IMR-90 (cell line): ENCODE measurements at regions of chr5 and their contacts with region 1.

Region 1: DNA sequence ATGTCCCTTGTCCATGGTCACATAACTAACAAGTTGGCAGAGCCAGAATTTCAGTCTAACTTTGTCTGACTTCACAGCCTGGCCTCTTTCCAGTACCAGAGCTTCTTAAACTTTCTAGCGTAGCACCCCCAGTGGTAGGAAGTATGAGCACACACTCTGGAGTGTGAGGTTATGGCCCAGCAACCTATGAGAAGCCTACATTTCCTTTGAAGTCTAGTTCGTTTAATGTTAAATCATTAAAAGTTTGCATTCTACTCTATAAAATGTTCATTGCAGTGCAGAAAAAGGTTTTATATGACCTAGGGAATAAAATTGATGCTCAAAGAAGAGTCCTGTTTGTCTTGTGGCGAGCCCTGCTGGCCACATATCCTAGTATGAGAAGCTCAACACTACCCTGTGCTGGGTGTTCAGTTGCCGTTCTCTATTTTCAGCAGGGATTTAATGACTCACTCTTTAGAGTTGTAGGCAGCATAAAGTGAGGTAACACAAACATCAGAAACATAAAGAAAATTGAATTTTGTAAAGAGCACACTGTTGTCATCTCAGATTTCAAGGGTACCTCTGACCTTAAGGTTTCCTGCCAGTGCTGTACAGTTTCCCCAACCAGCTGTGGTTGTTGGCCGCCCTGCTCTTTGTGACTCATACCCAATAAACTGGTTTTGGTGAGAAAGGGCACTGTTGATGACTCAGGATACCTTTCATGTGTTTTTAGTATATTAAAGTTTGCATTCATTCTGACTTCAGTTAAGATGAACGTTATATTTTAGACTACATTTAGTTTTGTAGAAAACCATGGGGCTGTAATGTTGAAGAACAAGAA is 14.3 kb downstream of the MCCC2 start:
- DNase-seq: peak; percentile 98
- ATAC-seq: peak; percentile 96
- H3K4me3 ChIP-seq: no peak overlapping the region
- H3K27ac ChIP-seq: peak overlapping the region; percentile 3; the same call in 1 of the 2 replicates
- H3K4me1 ChIP-seq: peaks cover 6% of the 10 kb centered on the region
- H3K27me3 ChIP-seq: no peaks in the 10 kb centered on the region
- CTCF ChIP-seq: peak; percentile 55
- POLR2A ChIP-seq: no peak
- RAD21 ChIP-seq: no peak

Region 2: GRCh38 chr5:72065751-72066255 is 464.4 kb after region 1 on chr5:
- CTCF ChIA-PET with region 1: no interaction called
- POLR2A ChIA-PET with region 1: no interaction called
- dilution Hi-C with region 1: no loop called
- in situ Hi-C with region 1: no loop called
- intact Hi-C with region 1: loop called (anchors 2 kb)
- DNase-seq: peak; percentile 50
- ATAC-seq: peak; percentile 36
- H3K4me3 ChIP-seq: no peak overlapping the region
- H3K27ac ChIP-seq: peak overlapping the region; percentile 3; the same call in 1 of the 2 replicates
- H3K4me1 ChIP-seq: peaks cover 13% of the 10 kb centered on the region
- H3K27me3 ChIP-seq: peaks cover 5% of the 10 kb centered on the region
- CTCF ChIP-seq: no peak
- POLR2A ChIP-seq: no peak
- RAD21 ChIP-seq: no peak